ENCODE measurements at regions of chr5 and their contacts with region 1.

Region 1: DNA sequence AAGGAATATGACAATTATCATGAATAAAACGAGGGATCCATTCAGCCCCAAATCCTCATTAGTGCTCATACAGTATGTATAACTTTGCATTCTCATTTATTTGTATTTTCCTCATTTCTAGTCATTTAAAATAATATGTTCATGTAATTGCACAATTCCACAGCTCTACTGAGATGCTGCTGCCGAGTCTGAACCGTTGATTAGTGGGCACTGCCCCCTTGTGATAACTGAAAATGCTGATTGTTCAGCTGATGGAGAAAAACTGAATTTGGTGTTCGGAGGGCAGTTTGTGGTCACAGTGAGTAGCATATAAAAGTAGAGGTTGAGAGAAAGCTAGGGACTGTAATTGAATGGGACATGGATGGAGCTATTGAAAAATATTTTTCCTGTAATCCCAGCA is 12.2 kb upstream of the GPR151 start:
- DNase-seq: no peak
- ATAC-seq: peak; percentile 38
- H3K4me3 ChIP-seq: no peak overlapping the region
- H3K27ac ChIP-seq: no peak overlapping the region
- H3K4me1 ChIP-seq: peaks cover 0 to under 1% of the 10 kb centered on the region in 2 experiments; a peak in 1 of 4 replicates
- H3K27me3 ChIP-seq: peaks cover 7% of the 10 kb centered on the region
- CTCF ChIP-seq: peak; percentile 26 to 46 (median 34); a peak in 4 of 6 replicates
- POLR2A ChIP-seq: no peak
- RAD21 ChIP-seq: peak; percentile 67

Region 2: GRCh38 chr5:146446853-146447733 is 81.1 kb before region 1 on chr5 and contains the start of gene TCERG1:
- CTCF ChIA-PET with region 1: interaction called, 10 read pairs
- POLR2A ChIA-PET with region 1: no interaction called
- RAD21 ChIA-PET with region 1: no interaction called
- intact Hi-C with region 1: no loop called
- DNase-seq: peak; percentile 100
- ATAC-seq: peak; percentile 92
- H3K4me3 ChIP-seq: peak within 1 kb of the TSS; percentile 74 to 83
- H3K27ac ChIP-seq: peak within 1 kb of the TSS; percentile 80
- H3K4me1 ChIP-seq: peaks cover 13 to 27% of the 10 kb centered on the region in 2 experiments; a peak in 3 of 4 replicates
- H3K27me3 ChIP-seq: no peaks in the 10 kb centered on the region
- CTCF ChIP-seq: peak; percentile 47 to 70 (median 63)
- POLR2A ChIP-seq: peak; percentile 18
- RAD21 ChIP-seq: no peak
- total RNA-seq, gene TCERG1: 83.5 TPM

Measured in HCT116 (cell line).